ENCODE measurements at regions of chr16 and their contacts with region 1.

Region 1: DNA sequence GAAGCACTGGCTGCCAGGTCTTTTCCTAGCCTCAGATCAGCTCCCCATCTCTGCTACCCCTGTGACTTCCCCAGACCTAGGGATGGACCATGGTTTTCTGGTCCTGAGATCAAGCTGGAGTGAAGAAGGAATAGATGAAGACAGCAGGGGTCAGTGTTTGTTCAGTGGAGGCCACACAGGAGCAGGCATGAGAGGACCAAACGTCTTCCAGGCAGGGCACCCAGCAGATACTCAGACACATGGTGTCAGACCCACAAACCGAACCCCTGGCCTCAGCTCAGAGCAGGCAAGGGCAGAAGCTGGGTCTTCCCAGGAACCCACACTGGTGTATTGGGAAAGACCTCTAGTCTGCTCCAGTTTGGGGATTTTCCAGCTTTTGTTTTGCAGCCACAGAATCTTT is 189.7 kb downstream of the IRX5 start:
- DNase-seq: no peak
- ATAC-seq: no peak
- H3K4me3 ChIP-seq: no peak overlapping the region
- H3K27ac ChIP-seq: no peak overlapping the region
- H3K4me1 ChIP-seq: no peaks in the 10 kb centered on the region
- H3K27me3 ChIP-seq: no peaks in the 10 kb centered on the region
- CTCF ChIP-seq: no peak
- POLR2A ChIP-seq: no peak

Region 2: GRCh38 chr16:55257966-55258613 is 137.7 kb after region 1 on chr16:
- in situ Hi-C with region 1: no loop called
- intact Hi-C with region 1: loop called (anchors 2 kb)
- DNase-seq: peak in 1 of 2 donors; percentile 30
- ATAC-seq: peak; percentile 7 to 30
- H3K4me3 ChIP-seq: no peak overlapping the region
- H3K27ac ChIP-seq: peak overlapping the region in 1 of 4 donors; percentile 32
- H3K4me1 ChIP-seq: peaks cover 0 to 11% of the 10 kb centered on the region in 2 donors
- H3K27me3 ChIP-seq: no peaks in the 10 kb centered on the region
- CTCF ChIP-seq: peak; percentile 44 to 64 (median 58)
- POLR2A ChIP-seq: no peak

Region 3: DNA sequence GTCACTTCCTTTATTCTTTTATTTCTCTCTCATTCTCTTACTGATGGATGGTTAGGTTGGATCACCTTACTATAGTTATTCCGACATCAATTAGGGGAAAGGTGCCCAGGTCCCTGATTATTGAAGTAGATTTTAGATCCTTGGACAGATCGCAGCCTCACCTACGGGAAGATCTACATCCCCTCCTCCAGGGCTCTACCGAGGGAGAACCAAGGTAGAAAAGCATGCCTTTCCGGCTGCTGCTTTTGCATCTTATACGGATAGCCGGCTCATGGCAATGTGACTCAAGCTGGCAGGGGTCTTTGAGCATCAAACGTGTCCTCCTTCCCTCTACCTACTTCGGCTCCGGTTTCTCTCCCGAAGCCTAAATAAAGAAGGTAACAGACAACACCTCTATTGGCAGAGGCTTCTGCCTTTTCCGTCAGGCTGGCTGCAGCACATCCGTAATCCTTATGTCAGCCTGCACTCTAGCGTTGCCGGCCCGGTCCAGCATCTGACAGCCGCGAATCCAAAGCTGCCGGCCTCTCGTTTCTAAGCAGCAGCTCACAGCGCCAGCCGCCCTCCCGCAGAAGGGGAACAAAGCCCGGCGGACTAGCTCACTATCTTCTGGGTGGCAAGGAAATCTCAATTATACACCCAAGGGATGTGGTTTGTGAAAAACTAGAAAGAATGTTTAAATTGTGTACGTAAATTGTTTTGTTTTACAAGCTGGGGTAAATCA is 250.5 kb after region 1 on chr16:
- in situ Hi-C with region 1: no loop called
- intact Hi-C with region 1: loop called (anchors 2 kb)
- DNase-seq: peak; percentile 48 to 49
- ATAC-seq: peak; percentile 76 to 83
- H3K4me3 ChIP-seq: no peak overlapping the region
- H3K27ac ChIP-seq: no peak overlapping the region
- H3K4me1 ChIP-seq: peaks cover 0 to 2% of the 10 kb centered on the region in 2 donors
- H3K27me3 ChIP-seq: peaks cover 0 to 17% (median 3%) of the 10 kb centered on the region in 3 donors
- CTCF ChIP-seq: peak in 4 of 5 experiments; percentile 38 to 58 (median 48)
- POLR2A ChIP-seq: no peak

Measured in gastrocnemius medialis (tissue), 4 donors.